Activated CD4-positive, alpha-beta T cell treated with anti-CD3 and anti-CD28 coated beads, Interleukin-2, amount 10 ng/mL, durations not matched to agents 7 days and 5 days (primary cell): ENCODE measurements at regions of chr9 and their contacts with region 1.

Region 1: DNA sequence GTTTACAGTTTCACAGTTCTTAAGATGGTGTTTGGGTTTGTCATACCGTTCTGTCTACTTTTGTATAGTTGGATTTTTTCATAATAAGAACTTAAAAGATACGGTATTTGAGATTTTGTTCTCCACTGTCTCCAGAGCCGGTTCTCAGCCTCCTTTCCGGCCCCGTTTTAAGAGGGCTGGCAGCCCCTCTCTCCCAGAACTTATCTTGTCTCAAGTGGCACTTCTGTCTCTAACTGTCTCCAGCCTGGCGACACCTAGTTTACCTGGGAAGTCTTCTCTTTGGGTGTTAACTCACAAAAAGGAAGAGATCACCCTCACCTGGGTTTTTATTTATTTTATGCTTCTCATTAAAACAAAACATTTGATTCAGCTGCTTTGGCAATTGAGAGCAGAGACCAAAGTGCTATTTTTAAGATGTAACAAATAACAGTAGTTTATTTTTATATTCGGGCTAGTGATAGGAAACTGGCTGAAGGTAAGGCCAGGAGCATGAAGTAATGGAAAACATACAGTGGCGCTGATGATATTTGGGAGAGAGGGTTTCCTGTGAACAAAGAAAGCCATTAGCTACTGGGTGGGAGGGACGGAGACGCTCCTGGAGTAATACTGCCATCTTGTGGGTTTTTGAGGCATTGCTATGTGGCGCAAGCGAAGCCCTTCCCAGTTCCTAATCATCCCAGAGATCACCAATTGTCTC is 48.3 kb downstream of the ACER2 start:
- DNase-seq: peak; percentile 72
- H3K4me3 Mint-ChIP-seq: peak overlapping the region; percentile 37
- H3K27ac Mint-ChIP-seq: no peak overlapping the region
- H3K4me1 Mint-ChIP-seq: peaks cover 11% of the 10 kb centered on the region
- H3K27me3 Mint-ChIP-seq: no peaks in the 10 kb centered on the region

Region 2: DNA sequence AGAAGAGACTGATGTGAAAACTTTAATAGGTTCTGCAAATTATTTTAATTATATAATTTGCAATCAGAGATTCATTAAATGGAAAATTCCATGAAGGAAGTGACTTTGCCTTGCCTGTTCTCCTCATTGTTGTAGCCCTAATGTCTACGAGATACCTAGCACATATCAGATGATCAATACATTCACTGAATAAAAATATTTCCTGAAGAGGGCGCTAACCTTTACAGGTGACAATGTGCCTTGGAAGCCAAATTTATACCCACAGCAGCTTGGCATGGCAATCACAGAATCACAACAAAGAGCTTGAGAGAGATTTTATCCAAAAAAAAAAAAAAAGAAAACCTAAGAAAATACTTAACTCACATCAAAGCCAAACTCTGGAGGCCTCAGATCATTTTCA is 371.8 kb before region 1 on chr9:
- CTCF ChIA-PET with region 1: interaction called, 11 read pairs
- POLR2A ChIA-PET with region 1: no interaction called
- DNase-seq: peak; percentile 15
- H3K4me3 Mint-ChIP-seq: no peak overlapping the region
- H3K27ac Mint-ChIP-seq: no peak overlapping the region
- H3K4me1 Mint-ChIP-seq: no peaks in the 10 kb centered on the region
- H3K27me3 Mint-ChIP-seq: no peaks in the 10 kb centered on the region

Region 3: GRCh38 chr9:19441730-19442129 is 15.4 kb before region 1 on chr9:
- CTCF ChIA-PET with region 1: interaction called, 10 read pairs
- POLR2A ChIA-PET with region 1: no interaction called
- DNase-seq: no peak
- H3K4me3 Mint-ChIP-seq: peak overlapping the region; percentile 44
- H3K27ac Mint-ChIP-seq: peak overlapping the region; percentile 81
- H3K4me1 Mint-ChIP-seq: peaks cover 18% of the 10 kb centered on the region
- H3K27me3 Mint-ChIP-seq: no peaks in the 10 kb centered on the region